Activated T-helper 2 cell treated with anti-CD3 and anti-CD28 coated beads, Interferon-gamma antibody, Interleukin-2, Interleukin-4, amounts not matched to agents 10 μg/mL and 5 μg/mL and 100 μg/mL, durations not matched to agents 14 hours and 24 hours and 36 hours (primary cell): ENCODE measurements at regions of chr18 and their contacts with region 1.

Region 1: GRCh38 chr18:57754577-57755338 is 48.4 kb downstream of the ATP8B1 start:
- DNase-seq: no peak
- H3K4me3 Mint-ChIP-seq: no peak overlapping the region
- H3K27ac Mint-ChIP-seq: no peak overlapping the region
- H3K4me1 Mint-ChIP-seq: peaks cover 9% of the 10 kb centered on the region
- H3K27me3 Mint-ChIP-seq: no peaks in the 10 kb centered on the region

Region 2: DNA sequence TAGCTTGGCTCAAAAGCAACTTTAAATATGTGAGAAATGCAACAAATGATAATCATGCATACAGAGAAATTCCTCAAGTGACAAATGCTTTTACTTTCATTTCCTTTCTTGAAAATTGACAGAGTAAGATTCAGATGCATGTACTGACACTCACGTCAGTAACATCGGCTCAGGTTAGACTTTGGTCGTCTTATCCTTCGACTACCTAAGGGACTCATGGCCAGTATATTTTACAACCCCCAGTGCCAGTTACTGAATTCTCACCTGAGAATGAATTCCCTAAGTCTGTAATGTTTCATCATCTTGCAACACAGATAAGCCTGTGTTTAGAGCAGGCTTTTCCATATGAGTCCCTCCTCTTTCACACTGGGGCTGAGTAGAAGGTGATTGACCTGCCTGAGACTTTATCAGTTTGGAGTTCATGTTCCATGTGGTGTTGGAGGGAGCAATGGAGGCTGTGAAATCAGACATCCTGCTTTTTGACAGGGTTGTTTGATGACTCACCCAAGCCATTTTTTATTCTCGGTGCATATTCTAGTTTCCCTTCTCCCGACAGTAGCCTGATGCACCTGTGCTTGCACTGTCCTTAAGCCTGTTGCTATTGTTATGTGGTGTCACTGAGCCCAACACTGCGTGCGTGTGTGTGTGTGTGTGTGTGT is 78.8 kb after region 1 on chr18:
- intact Hi-C with region 1: loop called (anchors 5 kb)
- DNase-seq: no peak
- H3K4me3 Mint-ChIP-seq: no peak overlapping the region
- H3K27ac Mint-ChIP-seq: no peak overlapping the region
- H3K4me1 Mint-ChIP-seq: peaks cover 21% of the 10 kb centered on the region
- H3K27me3 Mint-ChIP-seq: peaks cover 19% of the 10 kb centered on the region